Psoas muscle (tissue), 8 donors: ENCODE measurements at regions of chr1 and their contacts with region 1.

Region 1: GRCh38 chr1:167052389-167052788 is 37.8 kb downstream of the GPA33 start:
- DNase-seq: no peak
- ATAC-seq: no peak
- H3K4me3 ChIP-seq: no peak overlapping the region
- H3K27ac ChIP-seq: no peak overlapping the region
- H3K4me1 ChIP-seq: no peaks in the 10 kb centered on the region
- H3K27me3 ChIP-seq: no peaks in the 10 kb centered on the region
- CTCF ChIP-seq: peak; percentile 13

Region 2: DNA sequence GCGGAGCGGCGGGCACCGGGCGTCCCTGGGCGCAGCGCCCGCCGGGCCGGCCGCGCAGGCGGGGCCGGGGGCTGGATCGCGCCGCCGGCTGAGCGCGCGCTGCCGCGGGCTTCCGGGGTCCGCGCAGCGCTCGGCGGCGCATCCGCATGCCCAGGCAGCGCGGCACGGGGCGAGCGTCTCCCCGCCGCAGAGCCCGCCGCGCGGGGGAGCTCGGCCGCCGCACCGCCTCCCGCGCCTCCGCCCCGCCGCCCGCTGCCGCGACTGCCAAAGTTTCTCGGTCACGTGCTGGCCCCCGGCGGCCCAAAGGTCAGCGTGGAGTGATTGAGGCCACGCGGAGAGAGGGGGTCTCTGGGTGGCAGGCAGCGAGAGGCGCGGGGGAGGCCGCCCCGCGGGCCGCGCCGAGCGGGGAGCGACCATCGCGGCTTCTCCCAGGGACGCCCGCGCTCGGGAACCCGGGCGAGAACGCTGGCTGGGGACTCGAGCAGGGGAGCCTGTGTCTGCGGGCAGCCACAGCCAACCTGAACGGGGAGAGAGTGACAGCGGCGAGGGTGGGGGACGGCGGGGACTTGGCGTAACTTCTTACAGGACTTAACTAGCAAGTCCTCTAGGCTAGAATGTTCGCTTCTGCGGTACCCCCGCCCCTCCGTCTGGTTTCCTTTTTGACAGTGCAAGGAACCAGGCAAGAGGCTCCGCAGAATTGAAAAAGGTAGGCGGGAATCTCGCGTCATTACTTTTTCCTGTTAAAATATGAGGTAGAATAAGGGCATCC is 76.8 kb before region 1 on chr1 and contains the start of gene ILDR2:
- intact Hi-C with region 1: loop called in 1 of 2 experiments (anchors 5 kb)
- DNase-seq: peak; percentile 40 to 66
- ATAC-seq: peak; percentile 74 to 89 (median 84)
- H3K4me3 ChIP-seq: peak within 1 kb of the TSS; percentile 82
- H3K27ac ChIP-seq: no peak within 1 kb of the TSS
- H3K4me1 ChIP-seq: no peaks in the 10 kb centered on the region
- H3K27me3 ChIP-seq: peaks cover 0 to 33% (median 3%) of the 10 kb centered on the region in 3 donors
- CTCF ChIP-seq: peak; percentile 11
- total RNA-seq, gene ILDR2: 0.11 to 0.30 (median 0.17) TPM

Region 3: DNA sequence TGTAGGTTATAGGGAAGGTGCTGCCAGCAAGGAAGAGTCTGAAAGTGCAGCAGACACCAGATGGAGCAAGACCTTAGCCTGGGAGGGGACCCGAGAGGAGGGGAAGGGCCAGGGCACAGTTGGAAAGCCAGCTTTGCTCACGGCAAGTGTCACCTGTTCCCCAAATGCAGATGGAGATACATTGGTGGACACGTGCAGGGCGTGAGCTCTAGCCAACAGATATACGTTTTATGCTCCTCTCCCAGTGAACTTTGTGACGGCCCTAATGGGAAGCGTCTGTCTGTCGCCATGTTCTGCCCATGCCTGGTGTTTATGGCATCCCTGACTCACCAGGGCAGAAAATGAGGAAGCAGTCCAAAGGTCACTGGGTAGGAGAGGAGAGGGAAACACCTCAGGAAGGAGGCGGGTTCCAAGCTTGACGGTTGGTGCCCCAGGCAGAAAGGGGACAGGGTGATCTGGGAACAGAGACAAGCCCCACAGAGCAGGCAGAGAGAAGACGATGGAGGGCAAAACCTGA is 30.2 kb after region 1 on chr1:
- intact Hi-C with region 1: no loop called
- DNase-seq: no peak
- ATAC-seq: peak; percentile 52 to 86 (median 84)
- H3K4me3 ChIP-seq: no peak overlapping the region
- H3K27ac ChIP-seq: no peak overlapping the region
- H3K4me1 ChIP-seq: peaks cover 10% of the 10 kb centered on the region
- H3K27me3 ChIP-seq: no peaks in the 10 kb centered on the region
- CTCF ChIP-seq: peak; percentile 7

Region 4: GRCh38 chr1:167161242-167161641 is 108.9 kb after region 1 on chr1:
- intact Hi-C with region 1: no loop called
- DNase-seq: no peak
- ATAC-seq: no peak
- H3K4me3 ChIP-seq: no peak overlapping the region
- H3K27ac ChIP-seq: no peak overlapping the region
- H3K4me1 ChIP-seq: no peaks in the 10 kb centered on the region
- H3K27me3 ChIP-seq: no peaks in the 10 kb centered on the region
- CTCF ChIP-seq: no peak

Region 5: GRCh38 chr1:167185974-167186657 is 133.7 kb after region 1 on chr1:
- intact Hi-C with region 1: no loop called
- DNase-seq: no peak
- ATAC-seq: no peak
- H3K4me3 ChIP-seq: no peak overlapping the region
- H3K27ac ChIP-seq: no peak overlapping the region
- H3K4me1 ChIP-seq: no peaks in the 10 kb centered on the region
- H3K27me3 ChIP-seq: no peaks in the 10 kb centered on the region
- CTCF ChIP-seq: no peak

Region 6: DNA sequence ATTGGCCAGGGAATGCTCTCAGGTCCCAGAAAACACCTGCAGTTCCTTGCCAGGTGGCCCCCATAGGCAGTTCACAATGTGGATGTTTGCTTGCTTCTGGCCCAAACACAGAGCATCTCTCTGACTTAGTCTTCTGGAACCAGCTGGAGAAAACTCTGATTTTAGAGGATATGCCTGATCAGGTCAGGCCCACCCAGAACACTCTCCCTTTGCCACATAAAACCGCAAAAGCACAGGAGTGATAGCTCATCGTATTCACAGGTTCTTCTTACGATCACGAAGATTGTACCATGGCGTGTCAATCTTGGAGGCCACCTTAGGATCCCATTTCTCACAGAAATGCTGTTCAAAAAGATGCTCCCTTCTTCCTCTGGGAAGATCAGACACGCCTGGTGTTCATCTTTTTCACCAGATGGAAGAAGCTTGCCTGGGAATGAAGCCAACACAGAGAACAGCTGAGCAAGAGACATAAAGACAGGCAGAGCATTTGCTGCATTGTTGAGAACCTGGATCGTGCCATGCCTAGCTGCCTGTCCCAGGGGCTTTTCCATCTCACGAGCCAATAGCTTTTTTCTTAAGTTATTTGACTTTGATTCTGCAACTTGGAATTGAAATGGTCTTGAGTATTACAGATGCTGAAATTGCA is 477.6 kb after region 1 on chr1:
- intact Hi-C with region 1: no loop called
- DNase-seq: no peak
- ATAC-seq: no peak
- H3K4me3 ChIP-seq: no peak overlapping the region
- H3K27ac ChIP-seq: no peak overlapping the region
- H3K4me1 ChIP-seq: no peaks in the 10 kb centered on the region
- H3K27me3 ChIP-seq: no peaks in the 10 kb centered on the region
- CTCF ChIP-seq: no peak